ENCODE measurements at regions of chr3 and their contacts with region 1.

Region 1: GRCh38 chr3:24237971-24238767 is 256.5 kb downstream of the THRB start:
- DNase-seq: peak in 16 of 35 experiments; percentile 1 to 65 (median 8)
- ATAC-seq: no peak
- H3K4me3 ChIP-seq: no peak overlapping the region
- H3K4me3 Mint-ChIP-seq: no peak overlapping the region
- H3K27ac ChIP-seq: no peak overlapping the region
- H3K27ac Mint-ChIP-seq: no peak overlapping the region
- H3K4me1 ChIP-seq: no peaks in the 10 kb centered on the region
- H3K4me1 Mint-ChIP-seq: no peaks in the 10 kb centered on the region
- H3K27me3 ChIP-seq: no peaks in the 10 kb centered on the region
- H3K27me3 Mint-ChIP-seq: no peaks in the 10 kb centered on the region

Region 2: GRCh38 chr3:23888617-23889228 is 349.4 kb before region 1 on chr3:
- CTCF ChIA-PET with region 1: interaction called, 6 to 10 read pairs
- POLR2A ChIA-PET with region 1: no interaction called
- DNase-seq: peak in 2 of 35 experiments; percentile 26 to 68
- ATAC-seq: peak in 1 of 4 experiments; percentile 43
- H3K4me3 ChIP-seq: no peak overlapping the region
- H3K4me3 Mint-ChIP-seq: no peak overlapping the region
- H3K27ac ChIP-seq: no peak overlapping the region
- H3K27ac Mint-ChIP-seq: no peak overlapping the region
- H3K4me1 ChIP-seq: no peaks in the 10 kb centered on the region
- H3K4me1 Mint-ChIP-seq: peaks cover under 1 to 4% (median 3%) of the 10 kb centered on the region in 3 donors
- H3K27me3 ChIP-seq: no peaks in the 10 kb centered on the region
- H3K27me3 Mint-ChIP-seq: no peaks in the 10 kb centered on the region

Measured in T-cell (primary cell).